CD4-positive, alpha-beta memory T cell (primary cell): ENCODE measurements at regions of chr6 and their contacts with region 1.

Region 1: GRCh38 chr6:35240840-35241801 is 18.4 kb upstream of the ZNF76 start:
- DNase-seq: peak; percentile 53 to 66 (median 62)
- H3K4me3 ChIP-seq: no peak overlapping the region
- H3K4me3 Mint-ChIP-seq: no peak overlapping the region
- H3K27ac ChIP-seq: no peak overlapping the region
- H3K27ac Mint-ChIP-seq: peak overlapping the region in 1 of 7 donors; percentile 60
- H3K4me1 ChIP-seq: no peaks in the 10 kb centered on the region
- H3K4me1 Mint-ChIP-seq: peaks cover 3 to 6% (median 5%) of the 10 kb centered on the region in 4 donors
- H3K27me3 ChIP-seq: no peaks in the 10 kb centered on the region
- H3K27me3 Mint-ChIP-seq: no peaks in the 10 kb centered on the region

Region 2: DNA sequence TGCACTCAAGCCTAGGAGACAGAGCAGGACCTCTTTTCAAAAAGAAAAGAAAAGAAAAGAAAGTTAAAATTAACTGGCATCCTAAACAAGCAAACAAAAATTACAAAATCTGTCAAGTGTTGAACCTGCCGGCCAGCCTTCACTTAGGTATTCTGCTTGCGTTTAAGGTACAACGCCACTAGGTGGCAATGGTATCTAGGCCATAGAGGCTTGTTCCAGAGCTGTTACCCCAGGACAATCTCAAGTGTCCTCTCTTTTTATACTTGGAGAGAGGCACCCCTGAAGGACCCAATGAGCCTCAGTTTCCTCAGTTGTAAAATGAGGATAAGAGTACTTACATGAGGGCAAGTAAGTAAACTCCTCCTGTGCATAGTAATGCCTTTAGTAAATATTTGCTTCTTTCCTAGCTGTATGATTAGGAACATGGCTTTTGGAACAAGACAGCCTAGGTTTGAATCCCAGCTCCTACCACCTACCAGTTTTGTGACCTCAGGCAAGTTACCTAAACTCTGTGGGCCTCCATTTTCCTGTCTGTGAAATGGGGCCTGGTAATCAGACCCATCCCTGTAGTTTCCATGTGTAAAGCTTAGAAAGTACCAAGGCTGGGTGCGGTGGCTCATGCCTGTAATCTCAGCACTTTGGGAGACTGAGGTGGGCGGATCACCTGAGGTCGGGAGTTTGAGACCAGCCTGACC is 781.1 kb before region 1 on chr6:
- CTCF ChIA-PET with region 1: no interaction called
- POLR2A ChIA-PET with region 1: no interaction called
- intact Hi-C with region 1: loop called (anchors 1 kb)
- DNase-seq: peak; percentile 48 to 56 (median 52)
- H3K4me3 ChIP-seq: no peak overlapping the region
- H3K4me3 Mint-ChIP-seq: no peak overlapping the region
- H3K27ac ChIP-seq: no peak overlapping the region
- H3K27ac Mint-ChIP-seq: no peak overlapping the region
- H3K4me1 ChIP-seq: no peaks in the 10 kb centered on the region
- H3K4me1 Mint-ChIP-seq: peaks cover 0 to under 1% (median under 1%) of the 10 kb centered on the region in 4 donors
- H3K27me3 ChIP-seq: peaks cover under 1% of the 10 kb centered on the region
- H3K27me3 Mint-ChIP-seq: peaks cover 8% of the 10 kb centered on the region in 2 donors

Region 3: GRCh38 chr6:34904990-34905613 is 336.0 kb before region 1 on chr6:
- CTCF ChIA-PET with region 1: no interaction called
- POLR2A ChIA-PET with region 1: no interaction called
- intact Hi-C with region 1: no loop called
- DNase-seq: no peak
- H3K4me3 ChIP-seq: no peak overlapping the region
- H3K4me3 Mint-ChIP-seq: no peak overlapping the region
- H3K27ac ChIP-seq: no peak overlapping the region
- H3K27ac Mint-ChIP-seq: no peak overlapping the region
- H3K4me1 ChIP-seq: no peaks in the 10 kb centered on the region
- H3K4me1 Mint-ChIP-seq: peaks cover 4 to 9% (median 7%) of the 10 kb centered on the region in 4 donors
- H3K27me3 ChIP-seq: no peaks in the 10 kb centered on the region
- H3K27me3 Mint-ChIP-seq: no peaks in the 10 kb centered on the region

Region 4: DNA sequence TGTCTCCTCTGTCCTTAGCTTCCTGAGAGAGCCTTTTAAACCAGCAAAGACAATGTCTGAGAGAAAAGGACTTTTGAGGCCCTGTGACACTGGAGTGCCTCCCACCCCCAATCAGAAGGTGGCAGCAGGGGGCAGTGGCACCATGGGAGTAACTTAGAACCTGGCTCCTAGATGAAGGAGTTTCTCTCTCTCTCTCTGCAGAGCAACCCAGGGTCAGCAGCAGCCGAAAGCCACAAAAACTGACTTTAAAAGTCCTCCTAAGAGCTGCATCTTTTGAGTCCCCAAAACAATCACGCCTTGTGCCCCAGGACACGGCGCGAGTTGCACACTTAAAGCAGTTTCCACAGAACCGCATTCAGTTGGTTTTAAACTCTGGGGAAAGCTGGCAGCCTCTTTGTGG is 94.7 kb before region 1 on chr6:
- CTCF ChIA-PET with region 1: interaction called, 9 read pairs
- POLR2A ChIA-PET with region 1: no interaction called
- intact Hi-C with region 1: loop called (anchors 1 kb)
- DNase-seq: no peak
- H3K4me3 ChIP-seq: no peak overlapping the region
- H3K4me3 Mint-ChIP-seq: no peak overlapping the region
- H3K27ac ChIP-seq: no peak overlapping the region
- H3K27ac Mint-ChIP-seq: no peak overlapping the region
- H3K4me1 ChIP-seq: no peaks in the 10 kb centered on the region
- H3K4me1 Mint-ChIP-seq: peaks cover 0 to 3% (median 3%) of the 10 kb centered on the region in 4 donors
- H3K27me3 ChIP-seq: no peaks in the 10 kb centered on the region
- H3K27me3 Mint-ChIP-seq: peaks cover 2% of the 10 kb centered on the region in 2 donors

Region 5: GRCh38 chr6:35224720-35225119 is 16.4 kb before region 1 on chr6:
- CTCF ChIA-PET with region 1: interaction called, 26 read pairs
- POLR2A ChIA-PET with region 1: no interaction called
- intact Hi-C with region 1: no loop called
- DNase-seq: no peak
- H3K4me3 ChIP-seq: no peak overlapping the region
- H3K4me3 Mint-ChIP-seq: no peak overlapping the region
- H3K27ac ChIP-seq: no peak overlapping the region
- H3K27ac Mint-ChIP-seq: no peak overlapping the region
- H3K4me1 ChIP-seq: no peaks in the 10 kb centered on the region
- H3K4me1 Mint-ChIP-seq: no peaks in the 10 kb centered on the region
- H3K27me3 ChIP-seq: no peaks in the 10 kb centered on the region
- H3K27me3 Mint-ChIP-seq: peaks cover 4 to 8% of the 10 kb centered on the region in 2 donors

Region 6: GRCh38 chr6:35259194-35259947 is 18.2 kb after region 1 on chr6 and contains the start of gene ZNF76:
- CTCF ChIA-PET with region 1: interaction called, 29 read pairs
- POLR2A ChIA-PET with region 1: interaction called, 9 read pairs
- intact Hi-C with region 1: no loop called
- DNase-seq: peak; percentile 93 to 95 (median 94)
- H3K4me3 ChIP-seq: peak within 1 kb of the TSS; percentile 76 to 94
- H3K4me3 Mint-ChIP-seq: peak within 1 kb of the TSS; percentile 95 to 100 (median 98)
- H3K27ac ChIP-seq: peak within 1 kb of the TSS; percentile 92
- H3K27ac Mint-ChIP-seq: peak within 1 kb of the TSS; percentile 94 to 100 (median 99)
- H3K4me1 ChIP-seq: peaks cover 54% of the 10 kb centered on the region
- H3K4me1 Mint-ChIP-seq: peaks cover 37 to 57% (median 48%) of the 10 kb centered on the region in 4 donors
- H3K27me3 ChIP-seq: no peaks in the 10 kb centered on the region
- H3K27me3 Mint-ChIP-seq: no peaks in the 10 kb centered on the region
- total RNA-seq, gene ZNF76: 97.5 to 106 TPM